Esophagus muscularis mucosa (tissue), 4 donors: ENCODE measurements at regions of chr5 and their contacts with region 1.

Region 1: GRCh38 chr5:159209438-159210305 is at the start of gene RNF145:
- DNase-seq: peak; percentile 95
- H3K4me3 ChIP-seq: peak within 1 kb of the TSS; percentile 96 to 99 (median 98)
- H3K27ac ChIP-seq: peak within 1 kb of the TSS; percentile 94 to 98 (median 96)
- H3K4me1 ChIP-seq: peaks cover 30 to 36% (median 35%) of the 10 kb centered on the region in 4 donors
- H3K27me3 ChIP-seq: no peaks in the 10 kb centered on the region
- CTCF ChIP-seq: no peak
- EP300 ChIP-seq: no peak
- POLR2A ChIP-seq: no peak
- total RNA-seq, gene RNF145: 50.5 to 84.1 (median 63.9) TPM

Region 2: DNA sequence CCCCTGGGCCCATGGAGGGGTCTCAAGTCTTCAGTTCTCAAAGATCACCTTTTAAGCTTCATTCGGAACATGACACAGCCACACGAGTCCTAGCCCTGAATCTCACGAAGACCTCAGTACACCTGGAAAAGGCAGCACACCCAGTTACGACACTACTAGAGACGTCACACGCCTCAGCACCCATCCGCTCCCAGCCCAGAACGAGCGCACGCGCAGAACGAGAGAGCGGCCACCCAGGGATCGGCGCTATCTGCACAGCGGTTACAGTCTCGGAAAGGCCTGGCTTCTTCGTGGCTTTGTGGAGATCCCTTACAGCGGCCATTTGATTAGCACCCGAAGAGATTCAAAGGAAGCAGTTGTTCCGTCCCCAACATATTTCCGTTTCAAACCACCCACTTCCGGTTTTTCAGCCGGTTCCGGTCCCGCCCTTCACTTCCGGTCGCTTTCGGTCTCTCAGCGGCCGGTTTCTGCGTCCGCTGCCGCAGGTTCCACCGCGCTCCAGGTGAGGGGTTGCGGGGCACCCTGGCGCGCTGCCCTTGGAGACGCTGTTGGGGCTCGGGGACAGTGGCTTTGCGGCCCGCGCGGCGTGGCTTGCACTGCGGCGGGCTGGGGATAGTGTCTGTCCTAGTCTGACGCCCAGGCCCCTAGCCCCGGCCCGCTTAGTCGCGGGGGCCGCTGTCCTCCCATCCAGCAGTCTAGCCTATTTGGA is 53.3 kb after region 1 on chr5 and contains the start of gene UBLCP1:
- intact Hi-C with region 1: loop called (anchors 2 kb)
- DNase-seq: peak; percentile 94
- H3K4me3 ChIP-seq: peak within 1 kb of the TSS; percentile 79 to 98 (median 94)
- H3K27ac ChIP-seq: peak within 1 kb of the TSS; percentile 86 to 93 (median 88)
- H3K4me1 ChIP-seq: peaks cover 10 to 34% (median 23%) of the 10 kb centered on the region in 4 donors
- H3K27me3 ChIP-seq: no peaks in the 10 kb centered on the region
- CTCF ChIP-seq: no peak
- EP300 ChIP-seq: no peak
- POLR2A ChIP-seq: no peak
- total RNA-seq, gene UBLCP1: 17.5 to 22.8 (median 21.1) TPM